ENCODE measurements at regions of chr12 and their contacts with region 1.

Region 1: GRCh38 chr12:6620137-6620884 is 13.1 kb upstream of the CHD4 start:
- DNase-seq: peak; percentile 79
- H3K4me3 ChIP-seq: peak overlapping the region in 1 of 3 experiments; percentile 6
- H3K27ac ChIP-seq: no peak overlapping the region
- H3K4me1 ChIP-seq: no peaks in the 10 kb centered on the region
- H3K27me3 ChIP-seq: no peaks in the 10 kb centered on the region
- CTCF ChIP-seq: peak; percentile 85 to 89
- POLR2A ChIP-seq: no peak

Region 2: DNA sequence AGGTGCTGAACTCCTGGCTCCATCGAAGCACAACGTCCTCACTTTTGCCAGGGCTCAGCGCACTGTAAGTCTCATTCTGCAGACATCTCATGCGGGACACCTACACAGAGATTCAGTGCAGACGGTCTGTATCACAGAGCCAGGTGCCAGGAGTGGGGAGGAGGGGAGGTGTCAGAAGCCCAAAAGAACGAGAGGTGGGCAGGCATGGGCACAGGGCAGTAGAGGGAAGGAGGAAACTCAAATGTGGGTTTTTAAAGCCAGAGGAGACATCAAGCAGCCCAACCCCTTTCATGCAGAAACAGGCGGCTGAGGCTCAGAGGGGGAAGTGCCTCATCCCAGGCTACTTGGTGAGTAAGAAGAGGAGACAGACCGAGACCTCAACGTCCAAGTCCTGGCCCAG is 18.0 kb after region 1 on chr12:
- CTCF ChIA-PET with region 1: interaction called, 12 read pairs
- POLR2A ChIA-PET with region 1: interaction called, 3 read pairs
- dilution Hi-C with region 1: no loop called
- intact Hi-C with region 1: loop called (anchors 2 kb)
- DNase-seq: no peak
- H3K4me3 ChIP-seq: no peak overlapping the region
- H3K27ac ChIP-seq: no peak overlapping the region
- H3K4me1 ChIP-seq: peaks cover 13% of the 10 kb centered on the region
- H3K27me3 ChIP-seq: peaks cover 0 to 2% of the 10 kb centered on the region in 2 experiments
- CTCF ChIP-seq: no peak
- POLR2A ChIP-seq: no peak

Region 3: DNA sequence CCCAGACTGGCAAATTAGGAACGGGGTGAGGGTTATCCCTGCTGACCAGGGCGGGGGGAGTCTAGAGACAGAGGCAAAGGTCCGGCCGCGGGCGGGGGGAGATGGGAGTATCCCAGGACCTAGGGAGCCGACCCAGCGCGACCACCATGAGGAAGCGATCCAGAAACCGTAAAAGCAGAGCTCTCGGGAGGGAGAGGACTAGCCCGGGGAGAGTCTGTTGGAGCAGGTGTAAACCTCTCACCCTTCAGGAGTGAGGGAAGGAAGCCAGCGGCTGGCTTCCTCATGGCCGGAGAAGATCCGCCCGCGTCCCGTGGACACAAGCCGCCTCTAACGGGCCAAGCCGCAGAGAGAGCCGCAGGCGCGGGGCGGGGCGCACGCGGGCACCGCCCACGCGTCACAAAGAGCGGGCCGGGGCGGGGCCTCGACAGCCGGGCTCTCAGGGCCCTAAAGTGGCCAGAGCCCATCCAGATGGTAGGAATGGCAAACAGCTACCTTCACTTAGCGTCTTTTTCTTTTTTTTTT is 26.8 kb after region 1 on chr12 and contains the start of gene ACRBP:
- CTCF ChIA-PET with region 1: interaction called, 29 read pairs
- POLR2A ChIA-PET with region 1: no interaction called
- dilution Hi-C with region 1: no loop called
- intact Hi-C with region 1: loop called (anchors 1 kb)
- DNase-seq: peak; percentile 73
- H3K4me3 ChIP-seq: peak within 1 kb of the TSS; percentile 31 to 56 (median 48)
- H3K27ac ChIP-seq: no peak within 1 kb of the TSS
- H3K4me1 ChIP-seq: peaks cover 3% of the 10 kb centered on the region
- H3K27me3 ChIP-seq: no peaks in the 10 kb centered on the region
- CTCF ChIP-seq: no peak
- POLR2A ChIP-seq: peak; percentile 88
- total RNA-seq, gene ACRBP: 0.97 and 1.3 TPM in 2 replicates

Region 4: GRCh38 chr12:6662906-6663742 is 42.8 kb after region 1 on chr12 and contains the start of gene ING4:
- CTCF ChIA-PET with region 1: interaction called, 4 read pairs
- POLR2A ChIA-PET with region 1: no interaction called
- dilution Hi-C with region 1: no loop called
- intact Hi-C with region 1: loop called (anchors 1 kb)
- DNase-seq: peak; percentile 99
- H3K4me3 ChIP-seq: peak within 1 kb of the TSS; percentile 23 to 95 (median 82)
- H3K27ac ChIP-seq: peak within 1 kb of the TSS; percentile 61
- H3K4me1 ChIP-seq: peaks cover 10% of the 10 kb centered on the region
- H3K27me3 ChIP-seq: no peaks in the 10 kb centered on the region
- CTCF ChIP-seq: no peak
- POLR2A ChIP-seq: peak; percentile 60
- total RNA-seq, gene ING4: 26.3 and 34.7 TPM in 2 replicates

Region 5: GRCh38 chr12:6697584-6698351 is 77.5 kb after region 1 on chr12:
- CTCF ChIA-PET with region 1: interaction called, 63 read pairs
- POLR2A ChIA-PET with region 1: no interaction called
- dilution Hi-C with region 1: no loop called
- intact Hi-C with region 1: loop called (anchors 1 kb)
- DNase-seq: peak; percentile 58
- H3K4me3 ChIP-seq: no peak overlapping the region
- H3K27ac ChIP-seq: no peak overlapping the region
- H3K4me1 ChIP-seq: peaks cover 4% of the 10 kb centered on the region
- H3K27me3 ChIP-seq: peaks cover 28 to 42% of the 10 kb centered on the region in 2 experiments
- CTCF ChIP-seq: peak; percentile 74 to 80
- POLR2A ChIP-seq: no peak